BJ (cell line): ENCODE measurements at regions of chr3 and their contacts with region 1.

Region 1: GRCh38 chr3:46089237-46090011 is 62.1 kb upstream of the XCR1 start:
- DNase-seq: peak; percentile 52
- H3K4me3 ChIP-seq: no peak overlapping the region
- H3K27me3 ChIP-seq: no peaks in the 10 kb centered on the region
- CTCF ChIP-seq: no peak

Region 2: DNA sequence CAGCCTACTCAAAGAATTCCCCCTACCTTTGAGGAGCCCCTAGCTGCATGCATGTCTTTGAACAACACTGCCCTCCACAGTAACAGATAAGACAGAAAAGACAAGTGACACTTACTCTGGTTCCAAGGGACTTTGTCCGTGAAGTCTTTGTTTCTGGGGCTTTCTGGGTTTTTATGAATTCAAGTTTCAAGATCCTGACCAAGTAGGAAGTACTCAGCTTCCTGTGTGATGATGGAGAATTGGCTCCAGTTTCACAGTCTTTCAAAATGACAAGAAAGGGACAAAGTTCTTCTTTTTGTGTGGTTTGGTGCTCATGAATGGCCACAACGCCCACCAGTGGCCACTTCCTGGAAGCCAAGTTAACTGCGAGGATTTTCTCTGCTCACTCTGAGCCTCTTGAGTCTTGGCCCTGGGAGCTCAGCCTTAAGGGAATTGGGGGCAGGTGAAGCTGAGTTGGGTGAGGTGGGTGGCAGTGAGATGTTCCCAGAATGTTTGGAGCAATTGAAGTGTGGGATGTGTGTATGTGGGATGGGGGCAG is 118.8 kb after region 1 on chr3 and contains the start of gene CCR1:
- CTCF ChIA-PET with region 1: interaction called, 24 read pairs
- POLR2A ChIA-PET with region 1: no interaction called
- DNase-seq: no peak
- H3K4me3 ChIP-seq: no peak within 1 kb of the TSS
- H3K27me3 ChIP-seq: peaks cover 2% of the 10 kb centered on the region; the same call in 1 of the 2 replicates
- CTCF ChIP-seq: peak; percentile 68
- polyA plus RNA-seq, gene CCR1: not detected in 2 replicates

Region 3: GRCh38 chr3:46368569-46368968 is 279.1 kb after region 1 on chr3:
- CTCF ChIA-PET with region 1: interaction called, 39 read pairs
- POLR2A ChIA-PET with region 1: no interaction called
- DNase-seq: no peak
- H3K4me3 ChIP-seq: no peak overlapping the region
- H3K27me3 ChIP-seq: peaks cover 7% of the 10 kb centered on the region
- CTCF ChIP-seq: no peak

Region 4: GRCh38 chr3:46378426-46378942 is 289.1 kb after region 1 on chr3:
- CTCF ChIA-PET with region 1: interaction called, 39 read pairs
- POLR2A ChIA-PET with region 1: no interaction called
- DNase-seq: no peak
- H3K4me3 ChIP-seq: no peak overlapping the region
- H3K27me3 ChIP-seq: peaks cover 12% of the 10 kb centered on the region
- CTCF ChIP-seq: peak; percentile 77

Region 5: DNA sequence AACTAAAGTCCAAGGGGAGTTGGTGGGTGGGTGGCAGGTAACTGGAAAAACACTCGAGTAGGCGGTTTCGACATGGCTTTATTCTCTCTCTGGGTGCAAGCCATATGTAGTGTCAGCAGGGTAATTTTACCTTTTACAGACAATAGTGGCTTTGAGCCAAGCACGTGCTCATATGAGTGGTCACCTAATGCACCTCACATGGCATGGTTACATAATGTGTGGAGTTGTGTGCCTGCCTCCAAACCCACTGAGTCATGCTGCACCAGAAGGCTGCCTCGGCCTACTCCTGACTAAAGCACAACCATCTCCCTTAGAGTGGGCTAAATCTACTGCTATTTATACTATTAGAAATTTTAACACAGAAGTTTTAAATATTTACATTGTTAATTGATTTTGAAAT is 334.2 kb after region 1 on chr3:
- CTCF ChIA-PET with region 1: no interaction called
- POLR2A ChIA-PET with region 1: no interaction called
- DNase-seq: no peak
- H3K4me3 ChIP-seq: no peak overlapping the region
- H3K27me3 ChIP-seq: no peaks in the 10 kb centered on the region
- CTCF ChIP-seq: no peak